IMR-90 (cell line): ENCODE measurements at regions of chr16 and their contacts with region 1.

Region 1: DNA sequence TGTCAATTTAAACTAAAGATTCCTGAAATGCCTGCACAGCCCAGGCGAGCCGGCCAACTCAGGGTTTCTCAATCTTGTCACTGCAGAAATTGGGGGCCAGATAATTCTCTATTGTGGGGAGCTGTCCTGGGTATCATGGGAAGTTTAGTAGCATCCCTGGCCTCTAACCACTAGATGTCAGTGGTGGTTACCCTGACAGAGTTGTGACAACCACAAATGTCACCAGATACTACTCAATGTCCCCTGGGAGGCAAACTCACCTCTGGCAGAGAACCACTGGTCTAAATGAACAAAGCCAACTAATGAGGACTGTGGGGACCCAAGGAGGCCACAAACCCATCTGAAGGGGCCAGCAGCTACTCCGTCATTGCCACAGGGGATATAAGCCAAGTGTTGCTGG is 90.9 kb downstream of the MYH11 start:
- DNase-seq: peak; percentile 39
- ATAC-seq: peak; percentile 89
- H3K4me3 ChIP-seq: no peak overlapping the region
- H3K27ac ChIP-seq: no peak overlapping the region
- H3K4me1 ChIP-seq: peaks cover 3% of the 10 kb centered on the region
- H3K27me3 ChIP-seq: peaks cover 5% of the 10 kb centered on the region
- CTCF ChIP-seq: peak; percentile 71
- POLR2A ChIP-seq: no peak
- RAD21 ChIP-seq: peak; percentile 80

Region 2: DNA sequence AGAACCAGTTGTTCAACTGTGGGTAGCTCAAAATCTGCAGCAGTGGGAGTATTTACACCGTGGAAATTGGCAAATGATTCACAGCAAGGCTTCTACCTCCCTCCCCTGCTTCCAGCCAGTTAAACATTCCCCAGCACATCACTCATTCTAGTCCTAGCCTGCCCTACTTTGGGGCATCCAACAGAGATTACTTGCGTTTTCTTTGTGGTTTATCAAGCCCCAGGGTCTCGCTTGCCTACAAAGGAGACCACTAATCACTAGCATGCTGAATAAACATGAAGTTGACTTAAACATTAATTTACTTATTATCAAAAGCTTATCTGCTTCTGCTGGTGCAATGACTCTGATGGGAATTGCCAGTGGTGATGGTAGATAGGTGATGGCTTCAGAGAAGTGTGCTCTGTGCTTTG is 217.4 kb before region 1 on chr16:
- CTCF ChIA-PET with region 1: no interaction called
- POLR2A ChIA-PET with region 1: no interaction called
- dilution Hi-C with region 1: no loop called
- in situ Hi-C with region 1: no loop called
- intact Hi-C with region 1: no loop called
- DNase-seq: peak; percentile 16
- ATAC-seq: 0 out of 2 replicates have a peak, but pooled peaks have one; percentile 30
- H3K4me3 ChIP-seq: no peak overlapping the region
- H3K27ac ChIP-seq: no peak overlapping the region
- H3K4me1 ChIP-seq: 0 out of 2 replicates have a peak, but pooled peaks cover 1% of the 10 kb centered on the region
- H3K27me3 ChIP-seq: no peaks in the 10 kb centered on the region
- CTCF ChIP-seq: no peak
- POLR2A ChIP-seq: no peak
- RAD21 ChIP-seq: no peak

Region 3: DNA sequence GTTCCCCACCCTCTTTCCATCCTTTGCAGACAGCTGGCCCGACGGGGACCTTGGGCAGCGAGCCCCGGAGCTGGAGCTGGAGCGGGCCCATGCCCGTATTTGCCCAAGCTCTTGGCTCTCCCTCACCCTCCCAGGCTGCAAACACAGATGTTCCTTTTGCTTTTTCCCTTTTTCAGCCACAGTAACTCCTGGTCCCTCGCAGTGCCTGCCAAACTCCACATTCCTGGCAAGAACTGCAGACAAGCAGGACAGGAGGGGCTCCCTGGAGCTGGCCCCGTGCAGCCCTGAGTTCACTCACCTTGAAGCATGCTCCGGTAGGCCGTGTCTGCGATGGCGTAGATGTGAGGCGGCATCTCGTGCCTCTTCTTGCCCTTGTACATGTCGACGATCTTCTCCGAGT is 57.1 kb after region 1 on chr16:
- CTCF ChIA-PET with region 1: interaction called, 3 read pairs
- POLR2A ChIA-PET with region 1: no interaction called
- dilution Hi-C with region 1: no loop called
- in situ Hi-C with region 1: no loop called
- intact Hi-C with region 1: loop called (anchors 5 kb)
- DNase-seq: no peak
- ATAC-seq: no peak
- H3K4me3 ChIP-seq: no peak overlapping the region
- H3K27ac ChIP-seq: no peak overlapping the region
- H3K4me1 ChIP-seq: no peaks in the 10 kb centered on the region
- H3K27me3 ChIP-seq: peaks cover 9% of the 10 kb centered on the region
- CTCF ChIP-seq: no peak
- POLR2A ChIP-seq: no peak
- RAD21 ChIP-seq: no peak

Region 4: DNA sequence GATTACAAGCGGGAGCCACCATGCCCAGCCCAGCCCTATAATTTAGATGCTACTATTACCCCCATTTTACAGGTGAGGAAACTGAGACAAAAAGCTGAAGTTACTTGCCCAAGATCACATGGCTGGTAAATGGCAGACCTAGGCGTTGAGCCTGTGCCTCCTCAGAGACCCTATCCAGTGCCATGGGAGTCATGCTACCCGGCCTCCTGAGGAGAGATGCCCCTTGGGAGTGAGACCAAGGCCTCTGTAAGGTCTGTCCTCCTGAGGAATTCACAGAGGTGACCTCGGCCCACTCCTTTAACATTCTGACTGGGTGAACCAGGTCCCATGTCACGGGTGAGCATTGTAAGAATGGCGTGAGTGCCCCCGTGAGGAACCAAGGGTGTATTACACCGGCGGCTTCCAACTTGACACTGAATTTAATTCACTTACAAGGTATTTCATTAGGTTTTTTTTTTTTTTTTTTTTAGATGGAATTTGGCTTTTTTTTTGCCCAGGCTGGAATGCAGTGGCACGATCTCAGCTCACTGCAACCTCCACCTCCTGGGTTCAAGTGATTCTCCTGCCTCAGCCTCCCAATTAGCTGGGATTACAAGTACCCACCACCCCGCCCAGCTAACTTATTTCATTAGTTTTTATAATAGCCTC is 361.7 kb after region 1 on chr16:
- CTCF ChIA-PET with region 1: no interaction called
- POLR2A ChIA-PET with region 1: no interaction called
- dilution Hi-C with region 1: no loop called
- in situ Hi-C with region 1: no loop called
- intact Hi-C with region 1: loop called (anchors 5 kb)
- DNase-seq: peak; percentile 66
- ATAC-seq: peak; percentile 90
- H3K4me3 ChIP-seq: no peak overlapping the region
- H3K27ac ChIP-seq: no peak overlapping the region
- H3K4me1 ChIP-seq: no peaks in the 10 kb centered on the region
- H3K27me3 ChIP-seq: no peaks in the 10 kb centered on the region
- CTCF ChIP-seq: peak; percentile 77
- POLR2A ChIP-seq: no peak
- RAD21 ChIP-seq: peak; percentile 83

Region 5: DNA sequence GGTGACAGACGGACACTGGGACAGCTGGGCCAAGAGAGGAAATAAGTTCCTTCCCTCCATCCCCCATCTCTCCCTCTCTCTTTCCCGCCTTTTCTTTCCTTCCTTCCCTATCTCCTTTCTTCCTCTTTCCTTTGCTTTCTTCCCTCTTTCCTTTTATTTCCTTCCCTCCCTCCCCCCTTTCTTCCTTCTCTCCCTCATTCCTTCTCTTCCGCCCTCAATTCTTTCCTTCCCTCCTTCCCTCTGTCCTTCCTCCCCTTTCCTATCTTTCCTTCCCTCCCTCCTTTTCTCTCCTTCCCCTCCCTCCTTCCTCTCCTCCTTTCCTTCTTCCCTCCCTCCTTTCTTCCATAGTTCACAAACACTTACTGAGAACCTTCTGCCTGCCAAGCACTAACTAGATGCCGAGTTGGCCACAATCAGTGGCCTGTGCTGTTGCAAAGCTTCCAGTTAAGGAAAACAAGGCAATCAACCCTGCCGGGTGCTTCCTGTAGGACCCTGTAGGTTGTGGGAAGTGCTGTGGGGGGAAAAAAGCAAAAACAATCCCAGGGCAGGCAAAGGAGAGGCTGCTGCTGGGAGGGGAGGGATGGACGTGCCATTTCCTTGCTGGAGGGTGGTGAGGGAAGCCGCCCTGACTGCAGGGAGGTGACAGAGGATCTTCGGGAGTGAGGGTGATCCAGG is 425.8 kb after region 1 on chr16:
- CTCF ChIA-PET with region 1: no interaction called
- POLR2A ChIA-PET with region 1: no interaction called
- dilution Hi-C with region 1: no loop called
- in situ Hi-C with region 1: loop called (anchors 10 kb)
- intact Hi-C with region 1: loop called (anchors 5 kb)
- DNase-seq: no peak
- ATAC-seq: no peak
- H3K4me3 ChIP-seq: no peak overlapping the region
- H3K27ac ChIP-seq: no peak overlapping the region
- H3K4me1 ChIP-seq: no peaks in the 10 kb centered on the region
- H3K27me3 ChIP-seq: peaks cover 4% of the 10 kb centered on the region
- CTCF ChIP-seq: no peak
- POLR2A ChIP-seq: no peak
- RAD21 ChIP-seq: no peak